ENCODE measurements at regions of chr11 and their contacts with region 1.

Region 1: DNA sequence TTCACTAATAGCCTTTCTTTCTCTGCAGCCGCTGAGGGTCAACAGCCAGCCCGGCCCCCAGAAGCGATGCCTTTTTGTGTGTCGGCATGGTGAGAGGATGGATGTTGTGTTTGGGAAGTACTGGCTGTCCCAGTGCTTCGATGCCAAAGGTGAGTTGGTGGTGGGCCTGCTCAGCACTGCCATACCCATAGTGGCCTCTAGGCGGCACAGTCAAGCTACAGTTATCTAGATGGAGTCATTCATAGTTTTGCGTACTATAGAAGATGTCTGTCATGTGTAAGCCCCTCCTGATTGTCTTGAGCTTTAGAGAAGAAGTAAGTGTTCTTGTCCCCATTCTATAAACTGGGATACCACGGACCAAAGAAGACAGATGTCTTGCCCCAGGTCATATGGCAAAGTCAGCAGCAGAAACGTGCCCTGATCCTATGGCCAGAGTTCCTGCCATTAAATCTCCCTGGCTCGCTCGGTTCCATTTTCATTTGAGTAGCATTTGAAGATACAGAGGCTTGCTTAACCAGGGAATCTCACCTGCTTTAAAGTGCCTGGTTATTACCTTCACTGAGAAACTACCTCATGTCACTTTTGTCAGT is 42.1 kb upstream of the CRTAM start:
- DNase-seq: no peak
- H3K4me3 ChIP-seq: no peak overlapping the region
- H3K27ac ChIP-seq: no peak overlapping the region
- H3K4me1 ChIP-seq: peaks cover 7% of the 10 kb centered on the region
- H3K27me3 ChIP-seq: no peaks in the 10 kb centered on the region
- CTCF ChIP-seq: peak; percentile 56 to 70 (median 61)
- POLR2A ChIP-seq: no peak

Region 2: DNA sequence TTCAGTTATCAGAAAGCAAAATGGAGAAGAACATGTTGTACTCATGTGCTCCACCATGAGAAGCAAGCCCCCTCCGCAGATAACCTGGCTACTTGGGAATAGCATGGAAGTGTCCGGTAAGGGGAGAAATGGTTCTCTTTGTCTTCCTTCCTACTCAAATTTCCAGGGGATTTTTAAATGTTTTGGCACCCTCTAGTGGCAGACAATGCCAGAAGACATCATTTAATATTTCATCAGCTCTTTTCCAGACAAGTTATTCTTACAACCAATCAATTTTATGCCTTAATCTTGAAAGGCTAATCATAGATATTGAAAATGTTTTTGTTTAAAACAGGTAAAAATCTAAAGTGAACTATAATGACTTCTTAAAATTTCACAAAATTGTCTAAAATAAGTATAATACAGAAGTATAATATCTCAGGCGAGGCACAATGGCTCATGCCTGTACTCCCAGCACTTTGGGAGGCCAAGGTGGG is 57.8 kb after region 1 on chr11:
- intact Hi-C with region 1: loop called (anchors 10 kb)
- DNase-seq: no peak
- H3K4me3 ChIP-seq: no peak overlapping the region
- H3K27ac ChIP-seq: no peak overlapping the region
- H3K4me1 ChIP-seq: no peaks in the 10 kb centered on the region
- H3K27me3 ChIP-seq: no peaks in the 10 kb centered on the region
- CTCF ChIP-seq: peak; percentile 36 to 66 (median 55)
- POLR2A ChIP-seq: no peak